ENCODE measurements at regions of chr16 and their contacts with region 1.

Region 1: GRCh38 chr16:47141773-47142485 is 1.8 kb downstream of the NETO2 start:
- DNase-seq: peak; percentile 91
- ATAC-seq: peak; percentile 79
- H3K4me3 Mint-ChIP-seq: peak overlapping the region; percentile 75
- H3K27ac Mint-ChIP-seq: peak overlapping the region; percentile 58
- H3K4me1 Mint-ChIP-seq: peaks cover 35% of the 10 kb centered on the region
- H3K27me3 Mint-ChIP-seq: peaks cover 21% of the 10 kb centered on the region

Region 2: GRCh38 chr16:46947900-46948547 is 193.9 kb before region 1 on chr16:
- CTCF ChIA-PET with region 1: interaction called, 3 read pairs
- POLR2A ChIA-PET with region 1: no interaction called
- intact Hi-C with region 1: loop called (anchors 1 to 5 kb)
- DNase-seq: peak; percentile 56
- ATAC-seq: peak; percentile 64
- H3K4me3 Mint-ChIP-seq: no peak overlapping the region
- H3K27ac Mint-ChIP-seq: peak overlapping the region; percentile 70
- H3K4me1 Mint-ChIP-seq: peaks cover 22% of the 10 kb centered on the region
- H3K27me3 Mint-ChIP-seq: no peaks in the 10 kb centered on the region

Region 3: GRCh38 chr16:47110939-47111338 is 31.0 kb before region 1 on chr16:
- CTCF ChIA-PET with region 1: interaction called, 12 read pairs
- POLR2A ChIA-PET with region 1: interaction called, 5 read pairs
- intact Hi-C with region 1: loop called (anchors 1 to 2 kb)
- DNase-seq: no peak
- ATAC-seq: no peak
- H3K4me3 Mint-ChIP-seq: no peak overlapping the region
- H3K27ac Mint-ChIP-seq: no peak overlapping the region
- H3K4me1 Mint-ChIP-seq: peaks cover 23% of the 10 kb centered on the region
- H3K27me3 Mint-ChIP-seq: peaks cover 3% of the 10 kb centered on the region

Region 4: GRCh38 chr16:47574091-47575054 is 432.4 kb after region 1 on chr16:
- CTCF ChIA-PET with region 1: no interaction called
- POLR2A ChIA-PET with region 1: no interaction called
- intact Hi-C with region 1: loop called in 1 of 2 experiments (anchors 10 kb)
- DNase-seq: peak; percentile 66
- ATAC-seq: peak; percentile 87
- H3K4me3 Mint-ChIP-seq: no peak overlapping the region
- H3K27ac Mint-ChIP-seq: peak overlapping the region; percentile 78
- H3K4me1 Mint-ChIP-seq: peaks cover 46% of the 10 kb centered on the region
- H3K27me3 Mint-ChIP-seq: no peaks in the 10 kb centered on the region

Region 5: GRCh38 chr16:48156790-48157209 is 1014.9 kb after region 1 on chr16:
- CTCF ChIA-PET with region 1: interaction called, 13 read pairs
- POLR2A ChIA-PET with region 1: no interaction called
- intact Hi-C with region 1: loop called (anchors 1 to 2 kb)
- DNase-seq: peak; percentile 93
- ATAC-seq: peak; percentile 50
- H3K4me3 Mint-ChIP-seq: no peak overlapping the region
- H3K27ac Mint-ChIP-seq: no peak overlapping the region
- H3K4me1 Mint-ChIP-seq: peaks cover 25% of the 10 kb centered on the region
- H3K27me3 Mint-ChIP-seq: peaks cover 30% of the 10 kb centered on the region

Region 6: GRCh38 chr16:48632137-48632774 is 1490.3 kb after region 1 on chr16:
- CTCF ChIA-PET with region 1: interaction called, 3 read pairs
- POLR2A ChIA-PET with region 1: no interaction called
- intact Hi-C with region 1: loop called in 1 of 2 experiments (anchors 2 kb)
- DNase-seq: no peak
- ATAC-seq: no peak
- H3K4me3 Mint-ChIP-seq: no peak overlapping the region
- H3K27ac Mint-ChIP-seq: no peak overlapping the region
- H3K4me1 Mint-ChIP-seq: peaks cover 8% of the 10 kb centered on the region
- H3K27me3 Mint-ChIP-seq: peaks cover 2% of the 10 kb centered on the region

Measured in activated CD4-positive, alpha-beta T cell treated with anti-CD3 and anti-CD28 coated beads for 36 hours (primary cell).